PC-3 (cell line): ENCODE measurements at regions of chr2 and their contacts with region 1.

Region 1: GRCh38 chr2:188170356-188170755 is 121.3 kb upstream of the GULP1 start:
- DNase-seq: no peak
- ATAC-seq: no peak
- H3K4me3 ChIP-seq: no peak overlapping the region
- H3K27ac ChIP-seq: no peak overlapping the region
- H3K4me1 ChIP-seq: no peaks in the 10 kb centered on the region
- H3K27me3 ChIP-seq: no peaks in the 10 kb centered on the region
- CTCF ChIP-seq: no peak

Region 2: DNA sequence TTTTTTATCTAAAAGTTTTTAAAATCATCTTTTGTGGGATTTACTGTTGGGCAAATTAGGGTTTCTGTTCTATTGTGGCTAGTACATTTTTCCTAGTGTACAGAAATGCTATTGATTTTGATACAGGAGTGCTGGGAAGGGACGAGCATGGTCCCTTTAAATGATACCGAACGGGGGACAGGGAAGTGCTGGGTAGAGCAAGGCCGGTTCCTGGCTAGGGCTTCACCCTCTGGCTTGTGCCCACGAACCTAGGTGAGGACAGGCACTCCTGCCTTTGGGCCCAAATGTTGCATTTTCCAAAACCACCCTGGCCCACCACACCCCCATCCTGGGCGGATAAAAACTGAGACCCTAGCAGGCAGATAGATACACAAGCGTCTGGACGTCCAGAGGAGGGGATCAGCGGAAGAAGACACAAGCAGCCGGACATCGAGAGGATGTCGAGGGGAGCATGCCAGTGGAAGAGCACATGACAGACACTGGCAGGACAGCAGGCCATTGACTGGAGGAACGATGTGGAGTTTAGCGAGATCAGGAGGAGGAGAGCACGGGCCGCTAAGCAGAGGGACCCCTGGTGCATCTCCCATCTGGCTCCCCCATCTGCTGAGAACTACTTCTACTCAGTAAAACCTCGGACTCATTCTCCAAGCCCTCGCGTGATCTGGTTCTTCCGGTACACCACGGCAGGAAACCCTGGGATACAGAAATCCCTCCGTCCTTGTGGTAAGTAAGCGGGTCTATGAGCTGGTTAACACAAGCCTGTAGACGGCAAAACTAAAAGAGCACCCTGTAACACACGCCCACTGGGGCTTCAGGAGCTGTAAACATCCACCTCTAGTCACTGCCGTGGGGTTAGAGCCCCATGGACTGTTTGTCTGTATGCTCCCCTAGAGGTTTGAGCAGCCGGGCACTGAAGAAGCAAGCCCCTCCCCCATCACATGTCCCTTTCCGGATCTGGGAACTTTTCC is 708.8 kb before region 1 on chr2:
- CTCF ChIA-PET with region 1: no interaction called
- POLR2A ChIA-PET with region 1: interaction called, 24 read pairs
- intact Hi-C with region 1: no loop called
- DNase-seq: no peak
- ATAC-seq: no peak
- H3K4me3 ChIP-seq: no peak overlapping the region
- H3K27ac ChIP-seq: no peak overlapping the region
- H3K4me1 ChIP-seq: no peaks in the 10 kb centered on the region
- H3K27me3 ChIP-seq: no peaks in the 10 kb centered on the region
- CTCF ChIP-seq: no peak

Region 3: DNA sequence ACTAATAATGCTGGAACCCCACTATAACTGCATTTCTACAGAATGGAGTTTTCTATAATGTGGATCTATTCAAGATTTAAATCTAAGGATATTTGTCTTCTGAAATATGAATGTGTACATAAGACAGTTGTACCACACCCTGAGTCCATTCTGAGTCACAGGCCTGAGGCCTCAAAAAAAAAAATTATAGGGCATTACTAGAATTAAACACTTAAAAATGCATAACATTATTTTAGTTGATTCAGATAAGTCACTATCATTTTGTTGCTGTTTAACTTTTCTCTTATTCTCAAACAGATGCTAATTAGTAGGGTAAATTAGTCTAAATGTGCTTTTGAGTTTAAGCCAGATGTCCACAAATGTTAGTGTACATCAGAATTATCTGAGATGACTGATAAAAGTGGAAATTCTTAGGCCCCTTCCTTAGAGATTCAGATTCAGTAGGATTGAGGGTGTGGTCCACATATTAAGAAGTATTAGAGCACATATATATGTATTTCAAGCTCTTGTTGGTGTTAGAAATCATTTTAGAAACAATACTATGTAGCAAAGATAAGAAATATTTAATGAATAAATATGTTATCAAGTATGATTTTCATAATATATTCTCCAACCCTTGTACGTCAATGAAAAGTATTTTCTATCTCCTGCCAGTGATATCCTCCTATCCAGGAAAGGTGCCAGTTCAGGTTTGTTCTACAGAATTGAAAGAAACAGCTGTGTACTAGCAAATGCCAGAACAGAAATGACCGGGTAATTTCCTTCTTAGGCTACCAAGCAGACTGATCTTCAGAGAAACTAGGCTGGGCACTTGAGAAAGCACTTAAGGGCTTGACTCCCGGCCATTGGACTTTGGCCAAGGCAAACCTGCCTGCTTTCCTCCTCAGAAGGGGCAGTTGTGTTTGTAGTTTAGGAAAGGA is 1051.8 kb after region 1 on chr2:
- CTCF ChIA-PET with region 1: no interaction called
- POLR2A ChIA-PET with region 1: no interaction called
- intact Hi-C with region 1: no loop called
- DNase-seq: peak; percentile 94
- ATAC-seq: peak; percentile 42
- H3K4me3 ChIP-seq: peak overlapping the region; percentile 67
- H3K27ac ChIP-seq: peak overlapping the region; percentile 90
- H3K4me1 ChIP-seq: peaks cover 73% of the 10 kb centered on the region
- H3K27me3 ChIP-seq: no peaks in the 10 kb centered on the region
- CTCF ChIP-seq: no peak